ENCODE measurements at regions of chr11 and their contacts with region 1.

Region 1: GRCh38 chr11:86291466-86292262 is 10.4 kb upstream of the HIKESHI start:
- DNase-seq: peak; percentile 85
- ATAC-seq: peak; percentile 48
- H3K4me3 Mint-ChIP-seq: peak overlapping the region; percentile 17
- H3K27ac Mint-ChIP-seq: peak overlapping the region; percentile 89
- H3K4me1 Mint-ChIP-seq: peaks cover 63% of the 10 kb centered on the region
- H3K27me3 Mint-ChIP-seq: no peaks in the 10 kb centered on the region

Region 2: GRCh38 chr11:85627998-85628770 is 663.5 kb before region 1 on chr11 and contains the start of gene TMEM126B:
- CTCF ChIA-PET with region 1: no interaction called
- POLR2A ChIA-PET with region 1: no interaction called
- intact Hi-C with region 1: loop called in 1 of 2 experiments (anchors 1 kb)
- DNase-seq: peak; percentile 99
- ATAC-seq: peak; percentile 95
- H3K4me3 Mint-ChIP-seq: peak within 1 kb of the TSS; percentile 98
- H3K27ac Mint-ChIP-seq: peak within 1 kb of the TSS; percentile 100
- H3K4me1 Mint-ChIP-seq: peaks cover 35% of the 10 kb centered on the region
- H3K27me3 Mint-ChIP-seq: no peaks in the 10 kb centered on the region
- total RNA-seq, gene TMEM126B: 62.7 to 74.2 TPM

Region 3: GRCh38 chr11:85875142-85875922 is 416.3 kb before region 1 on chr11:
- CTCF ChIA-PET with region 1: no interaction called
- POLR2A ChIA-PET with region 1: no interaction called
- intact Hi-C with region 1: no loop called
- DNase-seq: no peak
- ATAC-seq: no peak
- H3K4me3 Mint-ChIP-seq: no peak overlapping the region
- H3K27ac Mint-ChIP-seq: no peak overlapping the region
- H3K4me1 Mint-ChIP-seq: peaks cover 19% of the 10 kb centered on the region
- H3K27me3 Mint-ChIP-seq: peaks cover 3% of the 10 kb centered on the region

Region 4: GRCh38 chr11:85947431-85948272 is 344.0 kb before region 1 on chr11:
- CTCF ChIA-PET with region 1: interaction called, 5 read pairs
- POLR2A ChIA-PET with region 1: interaction called, 9 read pairs
- intact Hi-C with region 1: loop called (anchors 1 kb)
- DNase-seq: peak; percentile 62
- ATAC-seq: peak; percentile 80
- H3K4me3 Mint-ChIP-seq: peak overlapping the region; percentile 46
- H3K27ac Mint-ChIP-seq: peak overlapping the region; percentile 97
- H3K4me1 Mint-ChIP-seq: peaks cover 48% of the 10 kb centered on the region
- H3K27me3 Mint-ChIP-seq: no peaks in the 10 kb centered on the region

Region 5: GRCh38 chr11:86116386-86116726 is 175.3 kb before region 1 on chr11:
- CTCF ChIA-PET with region 1: no interaction called
- POLR2A ChIA-PET with region 1: no interaction called
- intact Hi-C with region 1: loop called (anchors 2 to 5 kb)
- DNase-seq: peak; percentile 52
- ATAC-seq: peak; percentile 95
- H3K4me3 Mint-ChIP-seq: peak overlapping the region; percentile 0
- H3K27ac Mint-ChIP-seq: peak overlapping the region; percentile 66
- H3K4me1 Mint-ChIP-seq: peaks cover 32% of the 10 kb centered on the region
- H3K27me3 Mint-ChIP-seq: peaks cover 7% of the 10 kb centered on the region

Region 6: GRCh38 chr11:86218125-86219084 is 73.3 kb before region 1 on chr11:
- CTCF ChIA-PET with region 1: interaction called, 5 read pairs
- POLR2A ChIA-PET with region 1: interaction called, 4 read pairs
- intact Hi-C with region 1: loop called (anchors 1 kb)
- DNase-seq: peak; percentile 79
- ATAC-seq: peak; percentile 40
- H3K4me3 Mint-ChIP-seq: peak overlapping the region; percentile 26
- H3K27ac Mint-ChIP-seq: peak overlapping the region; percentile 91
- H3K4me1 Mint-ChIP-seq: peaks cover 78% of the 10 kb centered on the region
- H3K27me3 Mint-ChIP-seq: no peaks in the 10 kb centered on the region

Region 7: GRCh38 chr11:86302100-86302793 is 10.6 kb after region 1 on chr11 and contains the start of gene HIKESHI:
- CTCF ChIA-PET with region 1: interaction called, 11 read pairs
- POLR2A ChIA-PET with region 1: interaction called, 5 read pairs
- intact Hi-C with region 1: loop called (anchors 1 kb)
- DNase-seq: peak; percentile 97
- ATAC-seq: peak; percentile 99
- H3K4me3 Mint-ChIP-seq: peak within 1 kb of the TSS; percentile 96
- H3K27ac Mint-ChIP-seq: peak within 1 kb of the TSS; percentile 99
- H3K4me1 Mint-ChIP-seq: peaks cover 31% of the 10 kb centered on the region
- H3K27me3 Mint-ChIP-seq: no peaks in the 10 kb centered on the region
- total RNA-seq, gene HIKESHI: 50.2 to 51.3 TPM

Region 8: DNA sequence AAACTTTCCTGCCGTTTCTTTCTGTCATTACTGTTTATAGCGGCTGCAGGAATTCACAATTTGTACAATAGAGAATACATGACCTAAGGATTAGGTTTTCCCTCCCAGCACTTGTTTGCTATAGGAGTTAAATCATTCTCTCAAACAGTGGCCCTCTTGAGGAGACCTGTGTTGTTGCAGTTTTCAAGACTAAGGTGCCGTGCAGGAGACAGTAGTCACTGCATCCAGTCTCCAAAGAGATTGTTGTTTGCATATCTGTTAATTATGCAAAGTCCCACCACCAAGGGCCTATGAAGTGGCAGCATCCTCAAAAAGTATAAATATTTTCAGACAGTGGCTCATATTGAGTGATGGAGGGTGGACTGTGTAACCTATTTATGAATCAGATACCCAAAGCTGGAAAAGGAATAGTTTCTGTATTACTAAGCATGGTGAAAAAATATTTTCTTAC is 511.0 kb after region 1 on chr11:
- CTCF ChIA-PET with region 1: no interaction called
- POLR2A ChIA-PET with region 1: interaction called, 3 read pairs
- intact Hi-C with region 1: loop called in 1 of 2 experiments (anchors 5 kb)
- DNase-seq: peak; percentile 39
- ATAC-seq: peak; percentile 34
- H3K4me3 Mint-ChIP-seq: no peak overlapping the region
- H3K27ac Mint-ChIP-seq: no peak overlapping the region
- H3K4me1 Mint-ChIP-seq: peaks cover 62% of the 10 kb centered on the region
- H3K27me3 Mint-ChIP-seq: peaks cover 55% of the 10 kb centered on the region